ENCODE measurements at regions of chr14 and their contacts with region 1.

Region 1: GRCh38 chr14:99982537-99983250 is 82.5 kb upstream of the EVL start:
- DNase-seq: no peak
- H3K4me3 ChIP-seq: no peak overlapping the region
- H3K27ac ChIP-seq: no peak overlapping the region
- H3K4me1 ChIP-seq: peaks cover 4% of the 10 kb centered on the region
- H3K27me3 ChIP-seq: no peaks in the 10 kb centered on the region
- CTCF ChIP-seq: peak; percentile 64 to 88 (median 87)
- POLR2A ChIP-seq: no peak

Region 2: DNA sequence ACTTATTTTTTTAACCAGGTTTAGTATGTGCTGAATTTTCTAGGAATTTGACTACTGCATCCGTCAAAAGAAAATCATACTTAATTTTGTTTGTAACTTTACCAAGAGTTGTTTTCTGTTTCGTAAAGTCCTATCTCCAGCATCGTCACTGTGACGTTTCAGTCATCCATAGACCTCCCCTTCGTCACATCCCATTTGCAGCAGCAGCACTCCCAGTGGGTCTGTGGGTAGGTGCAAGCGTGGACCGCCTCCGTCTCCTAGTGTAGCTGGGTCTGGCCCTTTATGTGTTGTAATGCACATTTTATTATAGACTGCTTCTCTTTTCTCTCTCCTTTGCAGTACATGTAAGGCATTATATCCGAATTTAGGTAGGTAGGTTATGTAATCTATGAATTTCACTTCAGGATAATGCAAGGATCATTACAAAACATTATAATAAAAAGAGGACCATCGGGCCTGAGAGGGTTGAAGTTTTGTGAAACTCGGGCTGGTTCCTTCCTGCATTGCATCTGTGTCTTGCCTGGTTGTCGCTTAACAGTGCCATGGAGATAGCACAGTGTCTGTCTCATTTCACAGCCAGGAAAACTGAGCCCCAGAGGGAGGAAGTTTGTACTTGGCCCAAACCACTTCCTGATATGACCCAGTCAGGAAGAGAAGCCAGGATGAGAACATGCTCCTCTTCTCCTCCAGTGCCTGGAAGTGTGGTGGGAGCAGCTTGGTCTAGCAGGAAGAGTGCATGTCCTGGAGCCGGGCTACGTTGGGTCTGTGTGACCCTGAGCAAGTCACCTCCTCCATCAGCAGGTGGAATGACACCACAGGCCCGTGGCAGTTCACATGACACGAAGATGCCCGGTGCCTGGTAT is 123.8 kb after region 1 on chr14:
- intact Hi-C with region 1: loop called (anchors 2 kb)
- DNase-seq: no peak
- H3K4me3 ChIP-seq: no peak overlapping the region
- H3K27ac ChIP-seq: peak overlapping the region; percentile 30
- H3K4me1 ChIP-seq: peaks cover 63% of the 10 kb centered on the region
- H3K27me3 ChIP-seq: no peaks in the 10 kb centered on the region
- CTCF ChIP-seq: no peak
- POLR2A ChIP-seq: no peak

Region 3: DNA sequence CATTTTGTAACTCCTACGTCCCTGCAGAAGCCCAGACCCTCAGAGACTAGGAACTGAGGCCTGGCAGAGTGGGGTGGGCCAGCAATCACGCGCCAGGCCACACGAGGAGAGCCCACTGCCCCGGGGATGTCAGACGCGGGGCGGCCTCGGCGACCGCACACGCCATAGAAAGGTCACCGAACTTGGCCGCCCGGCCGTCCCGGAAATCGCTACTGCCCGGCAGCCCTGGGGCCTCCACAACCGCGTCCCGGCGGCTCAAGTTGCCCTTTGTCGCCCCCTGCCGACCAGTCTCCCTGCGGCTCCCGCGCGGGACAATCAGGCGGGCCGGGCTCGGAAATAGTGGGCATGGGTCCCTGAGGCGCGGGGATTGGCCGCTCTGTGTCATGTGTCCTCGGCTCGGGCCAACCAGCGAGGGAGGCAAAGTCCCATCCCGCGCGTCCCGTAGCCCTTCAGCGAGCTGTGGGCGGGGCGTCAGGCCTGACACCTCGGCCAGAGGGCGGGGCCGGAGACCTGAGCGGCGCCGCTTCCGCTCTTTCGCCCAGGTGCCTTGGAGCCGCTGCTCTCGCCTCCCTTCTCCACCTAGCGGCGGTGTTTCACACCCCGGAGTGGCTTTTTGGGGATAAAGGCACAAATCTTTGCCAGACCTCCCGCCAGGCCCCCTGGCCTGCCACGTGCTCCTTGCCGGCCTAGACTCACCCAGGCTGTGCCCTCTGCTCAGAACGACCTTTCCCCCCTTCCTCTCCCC is 210.2 kb after region 1 on chr14:
- intact Hi-C with region 1: loop called (anchors 5 kb)
- DNase-seq: peak in 1 of 2 donors; percentile 98
- H3K4me3 ChIP-seq: peak overlapping the region; percentile 42 to 46
- H3K27ac ChIP-seq: peak overlapping the region; percentile 94
- H3K4me1 ChIP-seq: peaks cover 12% of the 10 kb centered on the region
- H3K27me3 ChIP-seq: no peaks in the 10 kb centered on the region
- CTCF ChIP-seq: peak; percentile 77 to 91 (median 84)
- POLR2A ChIP-seq: no peak